ENCODE measurements at regions of chr1 and their contacts with region 1.

Region 1: GRCh38 chr1:77303387-77303786 is 21.6 kb downstream of the AK5 start:
- DNase-seq: no peak
- CTCF ChIP-seq: no peak

Region 2: DNA sequence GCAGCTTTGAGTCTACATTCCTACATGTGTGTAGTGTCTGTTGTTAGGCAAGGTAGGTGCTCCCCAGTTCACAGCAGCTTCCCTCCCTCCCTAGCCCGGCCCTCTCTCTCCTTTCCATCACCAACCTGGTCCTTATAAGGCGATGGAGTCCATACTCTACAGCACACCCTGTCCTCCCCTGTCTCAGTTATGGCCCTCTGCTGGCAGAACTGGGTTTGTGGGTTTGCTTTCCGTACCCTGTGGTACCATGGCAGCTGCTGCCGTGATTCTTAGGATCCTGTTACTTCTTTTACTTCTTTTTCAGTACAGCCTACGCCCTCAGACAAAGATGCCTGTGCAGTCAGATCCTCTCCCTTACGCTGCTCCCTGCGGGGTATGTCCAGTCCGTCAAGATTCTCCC is 10.1 kb after region 1 on chr1:
- CTCF ChIA-PET with region 1: interaction called, 10 read pairs
- POLR2A ChIA-PET with region 1: no interaction called
- DNase-seq: no peak
- CTCF ChIP-seq: no peak

Measured in GM10248 (cell line).